Aorta (tissue), 5 donors: ENCODE measurements at regions of chr2 and their contacts with region 1.

Region 1: DNA sequence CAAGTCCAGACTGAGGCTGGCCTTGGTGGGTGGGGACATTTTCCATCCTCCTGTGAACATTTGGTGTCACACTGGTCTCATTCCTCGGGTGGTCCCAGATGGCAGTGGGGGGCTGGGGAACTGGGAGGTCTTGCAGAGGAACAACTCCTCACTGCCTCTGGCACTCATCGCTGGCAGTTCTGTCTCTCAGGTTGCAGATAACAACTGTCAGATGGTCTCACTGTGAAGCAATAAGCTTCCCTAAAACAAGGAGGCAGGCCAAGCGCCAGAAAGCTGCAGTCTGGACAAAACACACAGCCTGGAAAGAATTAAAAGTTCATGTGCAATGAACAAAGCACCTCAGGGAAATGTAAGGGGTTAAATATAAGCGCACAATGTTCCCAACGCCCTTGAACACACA is 78.1 kb downstream of the IRS1 start:
- DNase-seq: peak in 1 of 2 donors; percentile 45
- ATAC-seq: no peak
- H3K4me3 ChIP-seq: no peak overlapping the region
- H3K27ac ChIP-seq: no peak overlapping the region
- H3K4me1 ChIP-seq: no peaks in the 10 kb centered on the region
- H3K27me3 ChIP-seq: no peaks in the 10 kb centered on the region

Region 2: DNA sequence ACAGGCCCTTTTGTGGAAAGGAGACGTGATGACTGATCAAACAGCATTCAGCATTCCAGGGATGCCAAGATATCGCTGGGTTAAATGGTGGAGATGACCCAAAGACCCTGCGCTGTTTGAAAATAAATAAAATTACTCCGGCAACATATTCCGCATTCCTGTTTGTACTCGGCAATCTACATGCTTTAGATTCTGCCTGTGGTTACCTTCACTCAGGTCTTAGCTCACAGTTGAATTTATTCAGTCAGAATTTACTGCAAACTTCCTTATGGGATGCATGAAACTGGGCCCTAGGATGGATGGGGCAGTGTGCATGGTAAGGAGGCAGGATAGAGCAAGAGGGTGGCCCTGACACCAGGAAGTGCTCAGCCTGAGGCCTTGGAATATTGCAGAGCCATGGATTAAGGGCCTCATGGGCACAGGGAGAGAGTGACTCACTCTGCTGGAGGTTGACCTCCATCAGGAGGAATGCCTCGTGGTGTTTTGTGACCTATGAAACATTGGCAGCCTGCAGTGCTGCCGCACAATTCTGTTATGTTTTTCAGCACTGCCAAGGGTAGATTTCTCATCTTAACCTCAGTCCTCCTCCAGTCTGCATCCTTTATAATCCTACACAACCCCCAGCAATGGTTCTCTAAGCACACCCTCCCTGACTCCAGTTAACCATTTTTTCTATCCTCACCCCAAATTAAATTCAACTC is 243.3 kb before region 1 on chr2:
- intact Hi-C with region 1: loop called in 1 of 2 experiments (anchors 5 kb)
- DNase-seq: peak; percentile 72 to 73
- ATAC-seq: peak; percentile 91
- H3K4me3 ChIP-seq: no peak overlapping the region
- H3K27ac ChIP-seq: peak overlapping the region; percentile 74 to 96
- H3K4me1 ChIP-seq: peaks cover 1 to 3% of the 10 kb centered on the region in 2 donors
- H3K27me3 ChIP-seq: no peaks in the 10 kb centered on the region

Region 3: GRCh38 chr2:226561962-226562361 is 159.6 kb before region 1 on chr2:
- intact Hi-C with region 1: no loop called
- DNase-seq: no peak
- ATAC-seq: no peak
- H3K4me3 ChIP-seq: no peak overlapping the region
- H3K27ac ChIP-seq: no peak overlapping the region
- H3K4me1 ChIP-seq: no peaks in the 10 kb centered on the region
- H3K27me3 ChIP-seq: no peaks in the 10 kb centered on the region

Region 4: GRCh38 chr2:226760412-226761194 is 39.1 kb after region 1 on chr2:
- intact Hi-C with region 1: loop called in 1 of 2 experiments (anchors 2 kb)
- DNase-seq: no peak
- ATAC-seq: no peak
- H3K4me3 ChIP-seq: no peak overlapping the region
- H3K27ac ChIP-seq: no peak overlapping the region
- H3K4me1 ChIP-seq: peaks cover 8 to 30% of the 10 kb centered on the region in 2 donors
- H3K27me3 ChIP-seq: no peaks in the 10 kb centered on the region

Region 5: DNA sequence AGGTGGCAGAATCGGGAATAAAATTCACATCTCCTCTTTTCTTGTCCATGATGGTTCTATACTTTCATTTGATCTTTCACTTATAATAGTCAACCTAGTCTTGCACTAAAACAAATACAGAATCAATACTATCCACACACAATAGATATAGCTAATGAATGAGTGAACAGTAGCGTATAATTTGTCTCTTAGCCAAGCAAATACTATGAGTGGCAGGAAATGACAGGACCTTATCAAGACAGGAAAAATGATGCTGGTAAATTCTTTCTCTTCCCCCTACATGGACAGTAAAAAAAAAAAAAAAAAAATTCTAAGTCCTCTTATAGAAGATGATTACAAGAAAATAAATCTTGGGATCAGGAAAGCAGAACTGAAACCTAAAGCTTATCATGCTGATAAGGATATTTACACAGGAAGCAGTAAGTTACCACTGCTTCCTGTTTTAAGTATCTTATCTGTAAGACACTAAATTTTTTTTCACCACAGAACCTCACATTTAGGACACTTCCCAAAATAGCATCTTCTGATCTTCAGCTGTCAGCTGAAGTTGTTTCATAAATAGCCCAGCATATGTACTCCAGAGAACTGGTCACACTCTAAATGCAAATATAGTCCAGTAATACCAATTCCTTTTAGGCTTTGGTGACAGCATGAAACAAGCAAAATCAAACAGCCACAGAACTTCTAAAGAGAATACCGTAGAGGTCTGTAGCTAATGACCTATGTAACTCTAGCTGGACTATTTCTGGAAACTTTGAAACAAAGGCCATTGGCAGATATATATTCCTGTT is 51.0 kb after region 1 on chr2:
- intact Hi-C with region 1: no loop called
- DNase-seq: no peak
- ATAC-seq: no peak
- H3K4me3 ChIP-seq: no peak overlapping the region
- H3K27ac ChIP-seq: no peak overlapping the region
- H3K4me1 ChIP-seq: peaks cover 0 to 6% of the 10 kb centered on the region in 2 donors
- H3K27me3 ChIP-seq: no peaks in the 10 kb centered on the region